ENCODE measurements at regions of chr1 and their contacts with region 1.

Region 1: DNA sequence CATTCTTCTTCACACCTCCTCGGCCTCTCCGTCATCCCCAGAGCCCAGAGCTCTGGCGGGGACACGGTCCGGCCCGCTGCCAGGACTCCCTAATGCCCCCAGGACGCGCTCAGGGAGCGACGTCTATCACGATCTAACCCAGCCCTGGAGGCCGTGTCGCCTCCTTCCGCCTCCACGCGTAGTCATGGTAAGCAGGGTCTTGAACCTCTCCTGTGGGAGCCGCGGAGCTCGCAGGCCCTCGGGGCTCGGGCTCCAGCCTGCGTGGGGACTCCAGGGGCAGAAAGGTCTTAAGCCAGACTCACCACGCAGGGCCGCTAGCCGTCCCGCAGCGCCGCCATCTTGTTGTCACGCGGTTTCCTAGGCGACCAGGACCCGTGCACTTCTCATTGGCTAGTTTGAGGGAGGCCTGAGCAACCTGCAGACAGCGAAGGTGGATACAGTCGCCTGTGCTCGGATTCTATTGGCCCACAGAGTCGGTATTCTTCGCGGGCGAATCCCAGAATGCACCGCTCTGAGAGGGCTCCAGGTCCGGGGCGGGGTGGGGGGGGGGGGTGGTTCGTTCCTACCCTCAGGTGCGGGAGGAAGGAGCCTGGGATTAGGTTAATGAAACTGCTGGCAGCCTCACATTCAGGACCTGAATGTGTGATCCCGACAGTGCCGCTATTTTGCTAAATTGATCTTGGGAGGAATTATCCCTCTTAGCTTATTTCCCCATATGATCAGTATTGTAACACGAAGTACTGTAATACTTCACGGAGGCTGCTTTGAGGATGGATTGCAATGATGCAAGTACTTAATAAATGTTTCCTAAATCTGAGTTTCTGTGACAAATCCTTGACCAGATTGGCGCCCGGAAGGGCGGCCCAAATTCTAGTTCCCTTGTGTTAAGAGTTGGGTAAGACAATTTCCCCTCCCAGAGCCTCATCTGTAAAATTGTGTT is at the start of gene UBXN11:
- DNase-seq: peak; percentile 98

Region 2: DNA sequence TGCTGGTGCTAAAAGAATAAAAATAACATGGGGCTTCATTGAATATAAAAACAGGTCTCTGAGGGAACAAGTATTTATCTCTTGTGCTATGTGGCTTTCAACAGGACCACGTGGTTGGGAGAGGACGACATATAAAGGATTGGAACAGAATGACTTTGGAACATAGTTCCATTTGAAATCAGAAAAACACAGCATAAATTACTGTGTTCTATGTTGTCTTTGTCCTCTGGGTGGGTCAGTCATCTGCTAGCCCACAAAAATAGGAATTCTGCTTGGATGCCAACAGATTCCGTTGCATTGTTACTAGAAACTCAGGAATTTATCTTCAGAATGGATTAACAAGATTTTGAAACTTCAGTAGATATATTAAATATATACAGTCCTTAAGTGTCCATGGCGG is 66.6 kb before region 1 on chr1:
- CTCF ChIA-PET with region 1: no interaction called
- POLR2A ChIA-PET with region 1: no interaction called
- DNase-seq: no peak

Region 3: GRCh38 chr1:26321315-26322041 is 14.9 kb after region 1 on chr1:
- CTCF ChIA-PET with region 1: interaction called, 11 read pairs
- POLR2A ChIA-PET with region 1: interaction called, 12 read pairs
- DNase-seq: peak; percentile 89

Measured in HEK293T (cell line).